ENCODE measurements at regions of chr15 and their contacts with region 1.

Region 1: DNA sequence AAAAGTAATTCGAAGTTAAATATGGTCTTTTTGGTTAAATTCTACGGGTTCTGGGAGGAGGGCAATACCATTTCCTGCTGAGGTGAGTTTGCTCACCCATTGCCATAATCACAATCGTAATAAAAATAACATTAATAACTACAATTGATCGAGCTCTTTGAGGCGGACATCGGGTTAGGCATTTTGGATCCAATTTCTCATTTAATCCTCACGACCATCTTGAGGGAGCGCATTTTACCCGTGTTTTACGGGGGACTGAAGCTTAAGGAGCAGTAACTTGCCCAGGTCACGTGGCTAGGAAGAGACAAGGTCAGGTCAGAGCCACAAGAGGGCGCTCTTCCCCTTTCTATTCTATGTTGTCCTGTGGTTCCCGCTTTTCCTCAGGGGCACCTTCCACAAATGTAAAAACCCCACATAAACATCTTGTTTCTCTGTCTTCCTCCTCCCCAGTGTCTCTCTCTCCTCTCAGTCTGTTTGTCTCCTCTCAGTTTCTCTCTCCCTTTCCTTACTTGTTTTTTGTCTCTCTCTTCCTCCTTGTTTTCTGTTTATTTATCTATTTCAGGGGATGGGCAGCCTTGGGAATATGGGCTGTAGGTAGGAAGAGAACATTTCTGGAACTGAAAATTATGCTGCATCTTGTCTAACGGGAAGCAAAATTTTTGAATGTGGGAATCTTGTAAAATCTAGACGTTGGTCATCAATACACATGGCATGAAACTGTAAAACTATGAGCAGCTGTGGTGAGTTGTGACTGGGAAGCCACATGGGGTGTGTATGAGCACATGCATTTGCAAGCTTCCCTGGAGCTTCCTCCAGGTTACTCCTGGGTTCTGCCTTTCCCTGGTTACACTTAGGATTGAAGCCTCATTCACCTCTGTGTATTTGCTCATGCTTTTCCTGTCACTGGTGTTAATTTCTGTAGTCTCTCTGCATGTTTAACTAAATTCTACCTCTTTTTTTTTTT is 71.0 kb downstream of the SQOR start:
- DNase-seq: peak; percentile 87
- H3K4me3 ChIP-seq: peak overlapping the region; percentile 65
- H3K27ac ChIP-seq: no peak overlapping the region
- H3K4me1 ChIP-seq: peaks cover 5% of the 10 kb centered on the region
- CTCF ChIP-seq: peak; percentile 93

Region 2: DNA sequence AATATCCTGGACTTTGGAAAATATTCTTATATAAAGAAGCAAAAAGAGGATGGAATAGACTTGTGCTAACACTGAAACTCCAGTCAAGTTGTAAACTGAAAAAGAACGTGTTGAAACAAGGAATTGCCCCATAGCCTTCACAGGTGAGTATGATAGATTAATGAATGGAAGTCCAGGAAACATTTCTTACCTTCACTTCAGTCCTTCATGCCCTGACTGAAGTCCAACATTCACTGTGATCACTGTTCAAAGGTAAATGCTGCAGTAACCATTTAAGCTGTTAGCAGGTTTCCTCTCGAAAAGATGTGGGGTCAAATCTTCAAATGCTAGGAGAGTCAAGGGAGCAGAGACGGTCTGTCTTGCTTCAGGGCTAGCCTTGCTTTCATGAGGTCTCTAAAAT is 229.4 kb before region 1 on chr15:
- CTCF ChIA-PET with region 1: no interaction called
- POLR2A ChIA-PET with region 1: no interaction called
- intact Hi-C with region 1: no loop called
- DNase-seq: no peak
- H3K4me3 ChIP-seq: no peak overlapping the region
- H3K27ac ChIP-seq: no peak overlapping the region
- H3K4me1 ChIP-seq: no peaks in the 10 kb centered on the region
- CTCF ChIP-seq: no peak

Region 3: DNA sequence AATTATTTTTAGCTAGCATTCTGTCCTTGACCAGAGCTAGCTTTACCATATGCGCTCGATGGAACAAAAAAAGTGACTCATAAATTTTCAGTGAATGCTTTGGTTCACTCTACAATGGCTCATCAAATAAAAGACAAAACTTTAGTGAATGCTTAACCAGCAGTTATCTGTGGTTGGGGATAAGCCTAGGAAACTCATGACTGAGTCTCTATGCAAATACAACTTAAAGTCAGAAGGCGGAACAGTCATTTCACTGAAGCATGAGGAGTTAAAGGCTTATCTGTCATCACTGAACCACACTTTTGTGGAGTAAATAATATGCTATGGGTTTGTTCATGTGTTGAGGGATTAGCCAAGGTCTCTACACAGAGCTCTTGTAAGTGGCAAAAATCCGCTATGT is 237.4 kb after region 1 on chr15:
- CTCF ChIA-PET with region 1: no interaction called
- POLR2A ChIA-PET with region 1: no interaction called
- intact Hi-C with region 1: loop called (anchors 10 kb)
- DNase-seq: no peak
- H3K4me3 ChIP-seq: no peak overlapping the region
- H3K27ac ChIP-seq: no peak overlapping the region
- H3K4me1 ChIP-seq: no peaks in the 10 kb centered on the region
- CTCF ChIP-seq: no peak

Region 4: GRCh38 chr15:46297766-46298165 is 592.0 kb after region 1 on chr15:
- CTCF ChIA-PET with region 1: interaction called, 4 read pairs
- POLR2A ChIA-PET with region 1: no interaction called
- intact Hi-C with region 1: loop called (anchors 10 kb)
- DNase-seq: peak; percentile 57
- H3K4me3 ChIP-seq: no peak overlapping the region
- H3K27ac ChIP-seq: no peak overlapping the region
- H3K4me1 ChIP-seq: peaks cover 22% of the 10 kb centered on the region
- CTCF ChIP-seq: no peak

Measured in OCI-LY7 (cell line).